ENCODE measurements at regions of chr15 and their contacts with region 1.

Region 1: DNA sequence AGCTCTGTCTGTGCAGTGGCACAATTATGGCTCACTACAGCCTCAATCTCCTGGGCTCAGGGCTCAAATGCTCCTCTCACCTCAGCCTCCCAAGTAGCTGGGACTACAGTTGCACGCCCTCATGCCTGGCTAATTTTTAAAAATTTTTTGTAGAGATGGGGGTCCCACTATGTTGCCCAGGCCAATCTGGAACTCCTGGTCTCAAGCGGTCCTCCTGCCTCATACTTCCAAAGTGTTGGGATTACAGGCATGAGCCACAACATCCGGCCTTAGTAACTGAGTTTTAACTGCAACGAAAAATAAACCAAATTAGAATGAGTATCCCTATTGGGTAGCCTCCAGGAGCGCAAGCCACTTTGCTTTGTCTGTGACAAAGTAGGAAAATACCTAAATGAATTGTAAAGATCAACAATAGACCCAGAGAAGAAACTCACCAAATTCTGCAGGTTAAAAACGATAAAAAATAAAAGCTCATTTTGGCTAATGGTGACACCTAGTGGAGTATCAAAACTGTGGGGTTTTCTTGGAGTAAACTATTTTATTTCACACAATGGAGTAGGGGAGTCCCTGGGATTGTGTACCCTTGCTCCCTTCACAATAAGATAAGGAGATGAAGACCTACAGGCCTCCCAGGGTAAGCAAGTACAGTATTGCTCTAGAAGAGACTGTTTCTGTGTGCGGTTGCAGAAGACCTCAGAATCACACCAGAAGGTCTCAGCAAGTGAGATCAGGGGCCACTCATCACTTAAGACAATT is 21.0 kb upstream of the CA12 start:
- DNase-seq: peak; percentile 53
- H3K27ac ChIP-seq: no peak overlapping the region
- CTCF ChIP-seq: peak; percentile 84

Region 2: DNA sequence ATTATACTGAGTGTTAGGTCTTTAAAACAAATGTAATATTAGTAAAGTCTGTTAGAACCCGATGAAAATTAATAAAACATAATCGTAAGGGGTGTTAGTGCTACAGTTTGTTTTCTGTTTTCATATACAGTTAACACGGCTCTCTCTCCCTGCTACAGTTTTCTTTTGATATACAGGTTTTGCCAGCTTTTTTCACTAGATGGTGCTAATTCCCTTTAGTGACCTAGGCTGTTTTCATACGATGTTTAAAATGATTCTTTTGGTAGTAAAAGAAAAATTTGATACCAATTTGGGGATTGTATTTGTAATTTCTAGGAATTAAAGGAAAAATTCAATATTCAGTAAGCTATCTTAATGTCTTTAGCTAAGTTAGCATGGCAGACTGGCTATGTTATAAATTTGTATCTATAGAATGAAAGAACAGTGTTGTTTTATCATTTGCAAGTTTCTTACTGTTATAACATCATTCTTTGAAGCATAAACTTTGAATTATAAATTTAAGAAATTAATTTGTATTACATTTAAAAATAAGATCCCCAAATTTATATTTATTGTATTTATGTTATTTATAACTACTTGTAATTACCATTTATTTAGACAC is 113.8 kb before region 1 on chr15:
- CTCF ChIA-PET with region 1: interaction called, 23 read pairs
- POLR2A ChIA-PET with region 1: no interaction called
- DNase-seq: peak; percentile 82
- H3K27ac ChIP-seq: no peak overlapping the region
- CTCF ChIP-seq: peak; percentile 92

Region 3: DNA sequence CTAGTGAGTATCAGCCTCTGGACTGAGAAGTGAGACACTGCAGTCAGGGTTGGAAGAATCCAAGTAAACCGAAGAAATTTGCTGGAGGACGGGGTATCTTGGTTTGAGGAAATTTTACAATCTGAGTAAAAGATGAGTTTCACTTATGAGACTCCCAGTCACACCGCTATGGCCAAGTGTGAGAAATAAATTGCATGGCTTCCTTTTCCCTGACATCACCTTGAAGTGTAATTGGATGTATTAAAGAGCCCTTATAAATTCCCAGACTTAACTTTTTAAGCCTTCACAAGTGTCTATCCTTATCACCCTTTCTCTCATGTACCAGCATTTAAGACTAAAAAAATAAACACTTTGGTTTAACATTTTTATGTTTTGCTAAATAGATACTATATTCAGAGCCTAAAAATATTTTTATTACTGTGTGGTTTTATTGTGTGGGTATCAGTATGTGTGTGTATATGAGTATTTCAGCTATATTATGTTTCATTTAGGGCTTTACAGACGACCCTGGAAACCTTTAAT is 125.5 kb after region 1 on chr15:
- CTCF ChIA-PET with region 1: no interaction called
- POLR2A ChIA-PET with region 1: no interaction called
- DNase-seq: no peak
- H3K27ac ChIP-seq: no peak overlapping the region
- CTCF ChIP-seq: no peak

Measured in RWPE1 (cell line).